ENCODE measurements at regions of chr2 and their contacts with region 1.

Region 1: GRCh38 chr2:135709992-135710391 is 31.7 kb upstream of the UBXN4 start:
- DNase-seq: peak; percentile 68
- ATAC-seq: no peak

Region 2: GRCh38 chr2:135004005-135004746 is 705.8 kb before region 1 on chr2:
- intact Hi-C with region 1: loop called (anchors 5 kb)
- DNase-seq: peak; percentile 85
- ATAC-seq: peak; percentile 99

Measured in left ventricle myocardium superior (tissue), 1 donor.